Activated CD4-positive, alpha-beta memory T cell treated with anti-CD3 and anti-CD28 coated beads for 36 hours (primary cell): ENCODE measurements at regions of chr3 and their contacts with region 1.

Region 1: DNA sequence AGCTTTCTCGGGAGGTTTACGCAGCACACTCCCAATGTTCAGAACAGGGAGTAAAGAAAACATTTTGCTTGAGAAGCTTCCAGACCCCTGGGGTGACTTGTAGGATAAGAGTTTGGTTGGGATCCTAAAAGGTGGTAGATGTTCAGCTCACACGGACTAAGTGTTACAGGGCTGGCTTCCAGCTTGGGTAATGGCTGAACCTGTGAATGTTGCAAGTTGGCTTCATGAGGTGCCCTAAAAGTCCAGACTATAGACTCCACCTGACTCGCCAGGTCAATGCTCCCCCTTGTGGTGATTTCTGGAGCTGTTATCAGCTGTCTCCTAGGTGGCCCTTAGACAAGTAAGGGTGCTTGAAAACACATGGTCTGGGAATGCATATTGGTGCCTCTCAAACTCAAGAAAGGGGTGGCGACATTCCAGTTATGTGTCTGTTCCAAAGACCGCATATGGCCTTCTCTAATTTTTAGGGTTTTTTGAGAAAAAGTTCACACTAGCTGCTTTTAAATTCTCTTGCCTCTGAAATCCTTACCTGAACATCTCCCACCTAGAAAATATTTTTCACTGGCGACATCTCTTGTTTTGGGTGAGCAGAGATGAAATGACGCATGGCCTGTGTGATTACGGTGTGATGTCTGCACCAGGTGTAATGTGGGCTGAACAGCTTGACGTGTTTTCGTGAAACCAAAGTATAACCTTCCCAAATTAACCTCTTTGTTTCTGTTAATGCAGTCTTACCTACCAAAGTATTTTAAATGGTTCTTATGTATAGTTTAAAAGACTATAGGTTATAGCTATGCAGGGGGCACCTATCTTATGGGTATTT is 175.7 kb upstream of the KBTBD8 start:
- DNase-seq: peak; percentile 76
- H3K4me3 Mint-ChIP-seq: no peak overlapping the region
- H3K27ac Mint-ChIP-seq: no peak overlapping the region
- H3K4me1 Mint-ChIP-seq: no peaks in the 10 kb centered on the region
- H3K27me3 Mint-ChIP-seq: no peaks in the 10 kb centered on the region

Region 2: GRCh38 chr3:66394019-66394752 is 428.2 kb before region 1 on chr3:
- CTCF ChIA-PET with region 1: interaction called, 13 read pairs
- POLR2A ChIA-PET with region 1: no interaction called
- intact Hi-C with region 1: loop called (anchors 5 kb)
- DNase-seq: peak; percentile 74
- H3K4me3 Mint-ChIP-seq: peak overlapping the region; percentile 73
- H3K27ac Mint-ChIP-seq: peak overlapping the region; percentile 93
- H3K4me1 Mint-ChIP-seq: peaks cover 57% of the 10 kb centered on the region
- H3K27me3 Mint-ChIP-seq: no peaks in the 10 kb centered on the region

Region 3: DNA sequence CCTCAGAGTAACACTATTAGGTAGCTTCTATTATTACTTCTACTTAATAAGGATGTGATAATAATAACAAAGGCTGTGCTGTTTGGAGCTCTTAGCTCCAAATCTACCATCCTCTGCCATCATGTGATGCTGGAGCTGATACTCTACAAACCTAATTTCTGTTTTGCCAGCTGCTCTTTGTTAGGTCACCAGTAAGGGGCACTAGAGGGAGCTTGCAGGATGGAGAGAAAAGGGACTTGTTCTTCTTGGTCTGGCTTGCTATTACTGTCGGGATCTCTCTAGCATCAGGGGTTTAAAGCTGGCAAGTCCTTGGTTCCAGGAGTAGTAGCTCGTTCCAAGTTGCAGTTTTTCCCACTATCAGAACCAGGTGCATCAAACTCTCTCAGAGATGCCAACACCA is 19.2 kb before region 1 on chr3:
- CTCF ChIA-PET with region 1: interaction called, 16 read pairs
- POLR2A ChIA-PET with region 1: interaction called, 3 read pairs
- intact Hi-C with region 1: no loop called
- DNase-seq: no peak
- H3K4me3 Mint-ChIP-seq: no peak overlapping the region
- H3K27ac Mint-ChIP-seq: no peak overlapping the region
- H3K4me1 Mint-ChIP-seq: no peaks in the 10 kb centered on the region
- H3K27me3 Mint-ChIP-seq: peaks cover 13% of the 10 kb centered on the region

Region 4: GRCh38 chr3:66998113-66998903 is 175.9 kb after region 1 on chr3 and contains the start of gene KBTBD8:
- CTCF ChIA-PET with region 1: no interaction called
- POLR2A ChIA-PET with region 1: no interaction called
- intact Hi-C with region 1: no loop called
- DNase-seq: peak; percentile 99
- H3K4me3 Mint-ChIP-seq: peak within 1 kb of the TSS; percentile 92
- H3K27ac Mint-ChIP-seq: peak within 1 kb of the TSS; percentile 92
- H3K4me1 Mint-ChIP-seq: peaks cover 37% of the 10 kb centered on the region
- H3K27me3 Mint-ChIP-seq: peaks cover 9% of the 10 kb centered on the region
- total RNA-seq, gene KBTBD8: 13.5 to 15.5 TPM